Gastrocnemius medialis (tissue), 4 donors: ENCODE measurements at regions of chr6 and their contacts with region 1.

Region 1: GRCh38 chr6:32692019-32692418 is 25.6 kb upstream of the HLA-DQB1 start:
- DNase-seq: no peak
- ATAC-seq: no peak
- H3K4me3 ChIP-seq: no peak overlapping the region
- H3K27ac ChIP-seq: no peak overlapping the region
- H3K4me1 ChIP-seq: no peaks in the 10 kb centered on the region
- H3K27me3 ChIP-seq: peaks cover 0 to 4% (median 0%) of the 10 kb centered on the region in 3 donors
- CTCF ChIP-seq: peak in 1 of 5 experiments; percentile 28
- POLR2A ChIP-seq: no peak

Region 2: DNA sequence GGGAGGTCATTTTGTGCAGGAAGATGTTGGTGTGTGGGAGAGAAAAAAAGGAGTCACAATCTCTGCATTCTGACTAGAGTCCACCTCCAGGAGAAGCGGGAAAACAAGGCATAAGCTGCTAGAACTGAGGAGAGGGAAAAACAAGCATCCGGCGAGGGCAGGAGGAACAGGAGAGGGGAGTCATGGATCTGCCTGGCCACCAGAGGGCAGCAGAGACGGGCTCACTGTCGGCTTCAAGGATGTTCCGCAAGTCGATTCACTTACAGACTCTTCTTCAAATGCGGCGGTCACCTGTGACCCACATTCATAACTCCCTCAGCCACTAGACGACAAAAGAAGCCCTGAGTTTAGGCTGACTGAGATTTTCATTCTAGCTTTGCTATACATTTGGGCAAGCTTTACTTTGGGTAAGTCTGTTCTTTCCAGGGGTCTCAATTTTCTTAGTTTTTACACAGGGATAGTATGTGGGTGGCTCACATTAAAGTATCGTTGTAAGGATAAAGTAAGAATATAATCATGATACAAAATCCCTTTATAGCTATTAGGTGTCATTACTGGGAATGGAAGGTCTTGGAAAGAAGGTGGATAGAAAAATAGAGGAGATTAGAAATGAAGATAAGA is 278.5 kb before region 1 on chr6:
- in situ Hi-C with region 1: loop called in 1 of 4 experiments (anchors 10 kb)
- intact Hi-C with region 1: no loop called
- DNase-seq: peak; percentile 42 to 46
- ATAC-seq: peak; percentile 45 to 71
- H3K4me3 ChIP-seq: no peak overlapping the region
- H3K27ac ChIP-seq: no peak overlapping the region
- H3K4me1 ChIP-seq: peaks cover 0 to 3% of the 10 kb centered on the region in 2 donors
- H3K27me3 ChIP-seq: peaks cover 0 to 11% (median 6%) of the 10 kb centered on the region in 3 donors
- CTCF ChIP-seq: peak; percentile 64 to 94 (median 85)
- POLR2A ChIP-seq: no peak

Region 3: DNA sequence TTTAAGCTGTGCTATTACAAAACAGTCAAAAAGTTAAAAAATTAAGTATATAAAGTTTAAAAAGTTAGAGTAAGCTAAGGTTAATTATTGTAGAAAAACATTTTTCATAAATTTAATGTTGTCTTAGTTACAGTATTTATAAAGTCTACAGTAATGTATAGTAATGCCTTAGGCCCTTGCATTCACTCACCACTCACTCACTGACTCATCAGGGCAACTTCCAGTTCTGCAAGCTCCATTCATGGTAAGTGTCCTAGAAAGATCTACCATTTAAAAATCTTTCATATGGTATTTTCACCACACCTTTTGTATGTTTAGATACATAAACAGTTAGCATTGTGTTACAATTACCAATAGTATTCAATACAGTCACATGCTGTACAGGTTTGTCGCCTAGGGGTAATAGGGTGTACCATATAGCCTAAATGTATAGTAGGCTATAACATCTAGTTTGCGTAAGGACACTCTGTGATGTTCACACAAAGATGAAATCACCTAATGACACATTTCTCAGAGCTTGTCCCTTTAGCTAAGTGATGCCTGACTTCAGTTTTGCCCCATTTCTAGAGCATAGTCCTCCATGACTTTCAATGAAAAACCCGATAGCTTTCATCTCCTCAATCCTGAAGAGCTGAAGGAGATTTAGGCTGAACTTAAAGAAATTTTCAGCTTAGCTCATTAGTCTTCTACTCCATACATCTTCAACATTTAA is 267.3 kb before region 1 on chr6:
- in situ Hi-C with region 1: loop called (anchors 5 to 10 kb)
- intact Hi-C with region 1: no loop called
- DNase-seq: no peak
- ATAC-seq: no peak
- H3K4me3 ChIP-seq: no peak overlapping the region
- H3K27ac ChIP-seq: no peak overlapping the region
- H3K4me1 ChIP-seq: no peaks in the 10 kb centered on the region
- H3K27me3 ChIP-seq: peaks cover 2 to 9% (median 4%) of the 10 kb centered on the region in 3 donors
- CTCF ChIP-seq: no peak
- POLR2A ChIP-seq: no peak